Activated T-helper 2 cell treated with anti-CD3 and anti-CD28 coated beads, Interferon-gamma antibody, Interleukin-2, Interleukin-4, amounts not matched to agents 10 μg/mL and 5 μg/mL and 100 μg/mL, durations not matched to agents 14 hours and 24 hours and 36 hours (primary cell): ENCODE measurements at regions of chr3 and their contacts with region 1.

Region 1: GRCh38 chr3:28840976-28841376 is 439.9 kb upstream of the RBMS3 start:
- DNase-seq: no peak
- H3K4me3 Mint-ChIP-seq: no peak overlapping the region
- H3K27ac Mint-ChIP-seq: peak overlapping the region; percentile 69
- H3K4me1 Mint-ChIP-seq: peaks cover 31% of the 10 kb centered on the region
- H3K27me3 Mint-ChIP-seq: no peaks in the 10 kb centered on the region

Region 2: DNA sequence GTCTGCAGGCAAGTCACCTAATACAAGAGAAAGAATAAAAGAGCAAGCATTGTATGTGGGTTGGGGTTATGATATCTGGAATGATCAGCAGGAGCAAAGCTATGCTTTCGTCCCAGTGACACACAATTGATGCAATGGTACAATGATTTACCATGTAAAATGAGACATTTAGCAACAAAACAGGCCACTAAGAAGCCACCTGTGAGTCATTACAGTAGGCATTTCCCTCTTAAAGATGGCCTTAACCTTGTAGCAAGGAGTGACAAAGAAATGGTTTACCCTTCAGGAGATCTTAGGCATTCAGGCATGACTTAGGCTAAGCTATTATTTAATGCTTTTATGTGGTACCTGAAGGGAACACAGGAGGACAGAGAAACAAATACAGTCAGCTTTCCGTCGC is 66.6 kb after region 1 on chr3:
- intact Hi-C with region 1: loop called (anchors 1 kb)
- DNase-seq: no peak
- H3K4me3 Mint-ChIP-seq: no peak overlapping the region
- H3K27ac Mint-ChIP-seq: no peak overlapping the region
- H3K4me1 Mint-ChIP-seq: peaks cover 9% of the 10 kb centered on the region
- H3K27me3 Mint-ChIP-seq: peaks cover 4% of the 10 kb centered on the region

Region 3: DNA sequence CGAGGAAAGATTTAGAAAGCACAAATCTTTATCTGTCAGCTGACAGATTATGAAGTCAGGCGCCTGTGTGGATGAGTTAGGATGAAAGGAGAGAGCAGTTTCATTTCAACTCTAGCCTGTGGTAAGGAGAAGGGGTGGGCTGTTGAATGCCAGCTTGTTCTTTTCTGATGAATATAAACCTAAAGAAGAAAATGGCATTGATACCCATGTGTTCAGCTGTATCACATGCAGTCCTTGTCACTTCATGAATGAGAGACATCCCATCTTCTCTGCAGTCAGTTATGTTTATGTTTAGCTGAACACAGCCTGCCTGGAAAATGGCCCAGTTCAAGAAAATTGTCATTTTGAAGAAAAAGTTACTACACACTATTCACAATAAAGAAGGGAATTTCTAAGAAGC is 94.2 kb after region 1 on chr3:
- intact Hi-C with region 1: loop called (anchors 1 kb)
- DNase-seq: no peak
- H3K4me3 Mint-ChIP-seq: peak overlapping the region; percentile 3
- H3K27ac Mint-ChIP-seq: peak overlapping the region; percentile 77
- H3K4me1 Mint-ChIP-seq: peaks cover 27% of the 10 kb centered on the region
- H3K27me3 Mint-ChIP-seq: no peaks in the 10 kb centered on the region

Region 4: DNA sequence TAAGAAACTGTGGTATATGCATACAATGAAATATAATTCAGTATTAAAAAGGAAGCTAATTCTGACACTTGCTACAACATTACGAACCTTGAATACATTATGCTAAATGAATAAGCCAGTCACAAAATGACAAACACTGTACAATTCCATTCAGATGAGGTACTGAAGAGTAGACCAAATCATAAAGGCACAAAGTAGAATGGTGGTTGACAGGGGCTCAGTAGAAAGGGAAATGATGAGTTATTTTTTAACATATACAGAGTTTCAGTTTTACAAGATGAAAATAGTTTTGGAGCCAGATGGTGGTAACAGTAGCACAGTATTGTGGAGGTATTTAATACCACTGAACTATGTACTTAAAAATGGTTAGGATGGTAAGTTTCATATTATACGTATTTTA is 185.3 kb after region 1 on chr3:
- intact Hi-C with region 1: loop called (anchors 2 kb)
- DNase-seq: no peak
- H3K4me3 Mint-ChIP-seq: no peak overlapping the region
- H3K27ac Mint-ChIP-seq: peak overlapping the region; percentile 6
- H3K4me1 Mint-ChIP-seq: peaks cover 9% of the 10 kb centered on the region
- H3K27me3 Mint-ChIP-seq: no peaks in the 10 kb centered on the region

Region 5: GRCh38 chr3:29280404-29281093 is 439.6 kb after region 1 on chr3 and contains the start of gene RBMS3:
- intact Hi-C with region 1: loop called (anchors 5 kb)
- DNase-seq: no peak
- H3K4me3 Mint-ChIP-seq: peak within 1 kb of the TSS; percentile 80
- H3K27ac Mint-ChIP-seq: peak within 1 kb of the TSS; percentile 67
- H3K4me1 Mint-ChIP-seq: peaks cover 30% of the 10 kb centered on the region
- H3K27me3 Mint-ChIP-seq: peaks cover 19% of the 10 kb centered on the region
- total RNA-seq, gene RBMS3: 4.5 and 5.3 TPM in 2 replicates

Region 6: GRCh38 chr3:29936054-29936453 is 1095.1 kb after region 1 on chr3:
- intact Hi-C with region 1: loop called (anchors 5 kb)
- DNase-seq: no peak
- H3K4me3 Mint-ChIP-seq: no peak overlapping the region
- H3K27ac Mint-ChIP-seq: peak overlapping the region; percentile 65
- H3K4me1 Mint-ChIP-seq: peaks cover 27% of the 10 kb centered on the region
- H3K27me3 Mint-ChIP-seq: peaks cover 15% of the 10 kb centered on the region

Region 7: GRCh38 chr3:30751610-30752299 is 1910.8 kb after region 1 on chr3:
- intact Hi-C with region 1: loop called (anchors 5 kb)
- DNase-seq: peak; percentile 24
- H3K4me3 Mint-ChIP-seq: no peak overlapping the region
- H3K27ac Mint-ChIP-seq: no peak overlapping the region
- H3K4me1 Mint-ChIP-seq: peaks cover 38% of the 10 kb centered on the region
- H3K27me3 Mint-ChIP-seq: peaks cover 3% of the 10 kb centered on the region